H1 (cell line): ENCODE measurements at regions of chr9 and their contacts with region 1.

Region 1: DNA sequence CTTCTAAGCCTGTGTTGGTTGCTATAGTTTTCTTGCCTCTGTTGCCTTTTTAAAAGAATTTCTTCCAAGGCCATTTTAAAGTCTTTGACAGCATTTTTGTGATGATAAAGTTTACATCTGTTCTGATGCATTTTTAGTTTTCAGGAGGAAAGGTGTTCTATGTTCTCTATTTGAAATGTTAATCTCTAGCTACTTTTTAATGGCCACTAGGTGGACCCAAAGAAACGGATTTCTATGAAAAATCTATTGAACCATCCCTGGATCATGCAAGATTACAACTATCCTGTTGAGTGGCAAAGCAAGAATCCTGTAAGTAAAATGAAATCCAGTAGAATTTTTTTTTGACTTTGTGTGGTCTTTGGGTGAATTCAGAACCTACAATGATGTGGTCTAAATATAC is 60.2 kb downstream of the MELK start:
- DNase-seq: no peak
- H3K4me3 ChIP-seq: no peak overlapping the region
- H3K27ac ChIP-seq: no peak overlapping the region
- H3K4me1 ChIP-seq: no peaks in the 10 kb centered on the region
- H3K27me3 ChIP-seq: no peaks in the 10 kb centered on the region
- CTCF ChIP-seq: peak in 2 of 3 experiments; percentile 26 to 27; a peak in 2 of 4 replicates
- EP300 ChIP-seq: no peak
- POLR2A ChIP-seq: no peak
- RAD21 ChIP-seq: peak in 1 of 2 experiments; percentile 9; a peak in 2 of 4 replicates

Region 2: GRCh38 chr9:36728651-36729520 is 96.0 kb after region 1 on chr9:
- CTCF ChIA-PET with region 1: interaction called, 13 read pairs
- POLR2A ChIA-PET with region 1: interaction called, 3 read pairs
- DNase-seq: peak; percentile 70 to 99
- H3K4me3 ChIP-seq: no peak overlapping the region
- H3K27ac ChIP-seq: no peak overlapping the region
- H3K4me1 ChIP-seq: peaks cover 2 to 13% (median 4%) of the 10 kb centered on the region in 4 experiments; a peak in 6 of 7 replicates
- H3K27me3 ChIP-seq: no peaks in the 10 kb centered on the region
- CTCF ChIP-seq: peak; percentile 92 to 97 (median 93)
- EP300 ChIP-seq: no peak; a peak in 1 of 3 replicates
- POLR2A ChIP-seq: no peak
- RAD21 ChIP-seq: peak; percentile 96 to 97